RWPE1 (cell line): ENCODE measurements at regions of chr15 and their contacts with region 1.

Region 1: DNA sequence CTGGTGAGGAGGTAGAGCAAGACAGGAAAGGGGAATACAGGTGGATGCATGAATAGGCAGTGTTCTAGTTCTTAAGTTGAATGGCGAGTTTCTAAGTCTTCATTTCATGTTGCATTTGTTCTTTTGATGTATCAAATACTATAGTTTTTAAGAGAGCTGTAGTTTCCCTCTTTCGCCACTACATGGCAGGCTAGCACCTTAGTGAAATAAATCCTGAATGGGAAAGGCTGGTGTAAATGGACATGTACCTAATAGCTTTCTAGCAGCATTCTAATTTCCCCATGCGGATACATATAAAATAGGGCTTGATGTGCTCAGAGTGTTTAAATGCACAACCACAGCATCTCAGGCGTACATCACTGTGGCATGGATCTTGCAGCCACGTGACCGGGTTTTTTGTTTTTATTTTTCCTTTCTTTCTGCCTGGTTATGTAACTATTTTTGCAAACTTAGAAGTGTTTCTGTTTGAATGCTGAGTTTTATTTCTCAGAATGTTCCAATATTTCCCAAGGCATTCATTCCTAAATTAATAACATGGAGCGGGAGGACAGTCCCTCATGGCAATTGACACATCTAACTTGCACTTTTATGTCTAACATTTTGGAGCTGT is 23.5 kb upstream of the CLN6 start:
- DNase-seq: peak; percentile 75
- H3K27ac ChIP-seq: no peak overlapping the region
- CTCF ChIP-seq: peak; percentile 99

Region 2: GRCh38 chr15:66763186-66764066 is 1489.6 kb before region 1 on chr15:
- CTCF ChIA-PET with region 1: no interaction called
- POLR2A ChIA-PET with region 1: interaction called, 13 read pairs
- DNase-seq: no peak
- H3K27ac ChIP-seq: peak overlapping the region; percentile 49
- CTCF ChIP-seq: no peak

Region 3: DNA sequence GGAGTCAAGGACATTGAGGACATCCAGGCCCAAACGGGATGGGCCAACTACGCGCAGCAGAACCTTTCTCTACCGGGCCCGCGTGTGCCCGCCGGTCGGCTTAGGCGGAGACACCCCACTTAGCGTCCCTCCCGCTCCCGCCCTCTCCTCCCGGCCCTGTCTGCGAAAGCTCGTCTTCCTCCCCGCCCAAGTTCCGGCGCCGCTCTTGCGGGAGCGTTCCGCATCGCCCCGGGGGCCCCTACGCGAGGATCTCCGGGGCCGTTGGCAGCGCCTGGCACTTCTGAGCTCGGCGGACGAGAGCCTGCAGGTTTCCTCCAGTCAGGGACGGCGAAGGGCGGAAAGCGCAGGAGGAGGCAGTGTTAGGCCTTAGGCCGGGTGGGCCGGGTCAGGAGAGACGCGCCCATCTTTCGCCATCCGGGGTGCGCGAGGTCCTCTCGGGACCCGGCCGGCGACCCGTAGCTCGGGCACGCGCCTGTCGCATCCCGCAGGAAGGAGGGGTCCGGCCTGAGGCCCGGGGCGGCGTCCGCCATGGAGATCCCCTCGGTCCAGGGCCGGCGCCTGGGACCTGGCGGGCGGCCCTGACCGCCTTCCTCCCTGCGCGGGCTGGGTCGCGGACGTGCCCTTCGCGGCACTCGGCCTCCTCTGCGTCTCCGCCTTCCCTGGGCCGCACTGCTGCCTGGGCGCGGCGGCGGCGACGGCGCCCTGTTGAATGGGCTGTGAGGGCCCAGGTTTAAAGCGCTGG is 24.7 kb after region 1 on chr15 and contains the start of gene FEM1B:
- CTCF ChIA-PET with region 1: interaction called, 21 read pairs
- POLR2A ChIA-PET with region 1: interaction called, 12 read pairs
- DNase-seq: peak; percentile 81
- H3K27ac ChIP-seq: peak within 1 kb of the TSS; percentile 100
- CTCF ChIP-seq: no peak; the same call in 1 of the 2 replicates

Region 4: GRCh38 chr15:68295014-68295805 is 42.2 kb after region 1 on chr15:
- CTCF ChIA-PET with region 1: interaction called, 12 read pairs
- POLR2A ChIA-PET with region 1: no interaction called
- DNase-seq: no peak
- H3K27ac ChIP-seq: no peak overlapping the region
- CTCF ChIP-seq: no peak

Region 5: GRCh38 chr15:68304589-68305337 is 51.7 kb after region 1 on chr15:
- CTCF ChIA-PET with region 1: interaction called, 39 read pairs
- POLR2A ChIA-PET with region 1: no interaction called
- DNase-seq: peak; percentile 38
- H3K27ac ChIP-seq: peak overlapping the region; percentile 67
- CTCF ChIP-seq: no peak

Region 6: DNA sequence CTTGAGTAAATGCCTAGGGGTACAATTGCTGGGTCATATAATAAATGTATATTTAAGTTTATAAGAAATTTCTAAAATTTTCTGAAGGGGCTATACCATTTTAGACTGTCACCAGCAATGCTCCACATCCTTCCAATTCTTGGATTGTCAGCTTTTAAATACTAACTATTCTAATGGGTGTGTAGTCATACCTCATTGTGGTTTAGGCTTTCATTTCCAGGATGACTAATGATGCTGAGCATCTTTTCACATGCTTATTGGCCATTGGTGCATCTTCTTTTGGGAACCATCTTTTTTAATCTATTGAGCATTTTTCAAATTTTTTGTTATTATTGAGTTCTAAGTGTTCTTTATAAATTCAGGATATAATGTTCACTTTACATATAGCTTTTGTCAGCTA is 273.2 kb after region 1 on chr15:
- CTCF ChIA-PET with region 1: no interaction called
- POLR2A ChIA-PET with region 1: no interaction called
- DNase-seq: peak; percentile 33
- H3K27ac ChIP-seq: no peak overlapping the region
- CTCF ChIP-seq: no peak